Panc1 (cell line): ENCODE measurements at regions of chr1 and their contacts with region 1.

Region 1: GRCh38 chr1:33507661-33508060 is 35.2 kb downstream of the ZSCAN20 start:
- DNase-seq: no peak
- ATAC-seq: no peak
- H3K4me3 ChIP-seq: no peak overlapping the region
- H3K27ac ChIP-seq: no peak overlapping the region
- H3K4me1 ChIP-seq: no peaks in the 10 kb centered on the region
- H3K27me3 ChIP-seq: no peaks in the 10 kb centered on the region; the same call in none of the 2 replicates
- CTCF ChIP-seq: no peak

Region 2: GRCh38 chr1:33575324-33575879 is 67.7 kb after region 1 on chr1:
- CTCF ChIA-PET with region 1: interaction called, 13 read pairs
- POLR2A ChIA-PET with region 1: no interaction called
- in situ Hi-C with region 1: no loop called
- intact Hi-C with region 1: no loop called
- DNase-seq: no peak
- ATAC-seq: no peak
- H3K4me3 ChIP-seq: no peak overlapping the region
- H3K27ac ChIP-seq: no peak overlapping the region
- H3K4me1 ChIP-seq: no peaks in the 10 kb centered on the region
- H3K27me3 ChIP-seq: peaks cover 19% of the 10 kb centered on the region
- CTCF ChIP-seq: no peak

Region 3: GRCh38 chr1:33692206-33693188 is 184.8 kb after region 1 on chr1:
- CTCF ChIA-PET with region 1: no interaction called
- POLR2A ChIA-PET with region 1: no interaction called
- in situ Hi-C with region 1: no loop called
- intact Hi-C with region 1: no loop called
- DNase-seq: no peak
- ATAC-seq: no peak
- H3K4me3 ChIP-seq: no peak overlapping the region
- H3K27ac ChIP-seq: no peak overlapping the region
- H3K4me1 ChIP-seq: no peaks in the 10 kb centered on the region
- H3K27me3 ChIP-seq: peaks cover 3% of the 10 kb centered on the region
- CTCF ChIP-seq: no peak